Activated CD4-positive, alpha-beta memory T cell treated with anti-CD3 and anti-CD28 coated beads for 36 hours (primary cell): ENCODE measurements at regions of chr14 and their contacts with region 1.

Region 1: GRCh38 chr14:50003213-50004031 is 110.5 kb downstream of the ARF6 start:
- DNase-seq: peak; percentile 91
- H3K4me3 Mint-ChIP-seq: peak overlapping the region; percentile 71
- H3K27ac Mint-ChIP-seq: peak overlapping the region; percentile 95
- H3K4me1 Mint-ChIP-seq: peaks cover 49% of the 10 kb centered on the region
- H3K27me3 Mint-ChIP-seq: no peaks in the 10 kb centered on the region

Region 2: DNA sequence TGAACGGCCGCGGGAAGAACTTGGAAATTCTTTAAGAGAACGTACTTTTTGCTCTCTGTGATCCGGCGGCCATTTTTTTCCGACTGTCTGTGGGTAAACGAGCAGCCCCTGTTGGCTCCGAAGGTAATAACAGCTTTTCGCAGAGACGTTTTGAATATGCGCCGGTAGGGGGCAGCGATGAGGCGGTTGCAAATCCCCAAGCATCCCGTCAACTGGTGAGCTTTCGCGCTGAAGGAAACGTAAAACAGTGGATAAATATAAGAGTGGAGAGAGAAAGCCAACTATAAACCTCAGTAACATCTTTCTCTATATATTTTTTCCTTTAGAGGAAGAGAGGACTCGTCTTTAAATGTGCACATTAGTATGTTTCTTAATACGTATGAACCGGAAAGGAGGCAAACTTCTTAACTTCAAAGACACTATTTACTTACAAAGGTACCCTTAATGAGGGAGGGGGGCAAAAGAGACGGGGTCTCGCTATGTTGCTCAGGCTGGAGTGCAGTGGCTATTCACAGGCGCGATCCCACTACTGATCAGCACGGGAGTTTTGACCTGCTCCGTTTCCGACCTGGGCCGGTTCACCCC is 141.2 kb before region 1 on chr14:
- CTCF ChIA-PET with region 1: interaction called, 41 read pairs
- POLR2A ChIA-PET with region 1: interaction called, 83 read pairs
- intact Hi-C with region 1: loop called (anchors 1 kb)
- DNase-seq: peak; percentile 93
- H3K4me3 Mint-ChIP-seq: no peak overlapping the region
- H3K27ac Mint-ChIP-seq: no peak overlapping the region
- H3K4me1 Mint-ChIP-seq: peaks cover 24% of the 10 kb centered on the region
- H3K27me3 Mint-ChIP-seq: peaks cover 2% of the 10 kb centered on the region

Region 3: GRCh38 chr14:49897968-49898367 is 105.5 kb before region 1 on chr14:
- CTCF ChIA-PET with region 1: interaction called, 7 read pairs
- POLR2A ChIA-PET with region 1: interaction called, 93 read pairs
- intact Hi-C with region 1: loop called (anchors 1 kb)
- DNase-seq: no peak
- H3K4me3 Mint-ChIP-seq: peak overlapping the region; percentile 75
- H3K27ac Mint-ChIP-seq: peak overlapping the region; percentile 93
- H3K4me1 Mint-ChIP-seq: peaks cover 29% of the 10 kb centered on the region
- H3K27me3 Mint-ChIP-seq: no peaks in the 10 kb centered on the region

Region 4: DNA sequence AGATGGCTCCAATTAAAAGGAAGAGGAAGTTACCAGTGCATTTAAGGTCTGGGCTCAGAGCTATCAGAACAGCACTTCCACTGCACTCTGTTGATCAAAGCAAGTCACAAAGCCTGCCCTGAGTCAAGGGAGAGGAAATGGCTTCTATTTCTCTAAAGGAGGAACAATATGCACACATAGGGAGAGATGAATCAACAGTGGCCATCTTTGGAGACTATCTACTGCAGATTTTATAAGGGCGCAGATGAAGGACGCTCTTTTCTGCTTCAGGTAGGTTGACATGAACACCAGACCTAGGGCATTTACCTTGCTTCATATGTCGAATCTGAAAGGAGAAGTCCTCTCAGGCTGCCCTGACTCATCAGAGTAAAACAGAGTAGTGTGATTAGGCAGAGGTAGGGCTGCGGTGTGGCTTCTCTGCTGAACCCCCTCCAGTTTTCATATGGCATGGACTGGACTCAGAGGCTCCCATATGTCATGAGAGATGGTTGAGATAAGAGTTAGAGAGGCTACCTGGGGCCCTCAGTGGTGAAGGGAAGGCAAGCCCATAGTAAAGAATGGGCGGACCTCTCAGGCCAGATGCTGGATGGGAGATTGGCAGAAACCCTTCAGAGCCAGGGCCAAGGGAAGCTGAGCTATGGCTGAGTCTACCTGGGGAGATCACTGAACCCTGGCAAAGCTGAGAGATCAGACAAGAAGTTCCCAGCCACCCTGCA is 26.1 kb before region 1 on chr14:
- CTCF ChIA-PET with region 1: interaction called, 39 read pairs
- POLR2A ChIA-PET with region 1: interaction called, 162 read pairs
- intact Hi-C with region 1: loop called (anchors 1 kb)
- DNase-seq: peak; percentile 65
- H3K4me3 Mint-ChIP-seq: peak overlapping the region; percentile 66
- H3K27ac Mint-ChIP-seq: peak overlapping the region; percentile 91
- H3K4me1 Mint-ChIP-seq: peaks cover 87% of the 10 kb centered on the region
- H3K27me3 Mint-ChIP-seq: no peaks in the 10 kb centered on the region

Region 5: DNA sequence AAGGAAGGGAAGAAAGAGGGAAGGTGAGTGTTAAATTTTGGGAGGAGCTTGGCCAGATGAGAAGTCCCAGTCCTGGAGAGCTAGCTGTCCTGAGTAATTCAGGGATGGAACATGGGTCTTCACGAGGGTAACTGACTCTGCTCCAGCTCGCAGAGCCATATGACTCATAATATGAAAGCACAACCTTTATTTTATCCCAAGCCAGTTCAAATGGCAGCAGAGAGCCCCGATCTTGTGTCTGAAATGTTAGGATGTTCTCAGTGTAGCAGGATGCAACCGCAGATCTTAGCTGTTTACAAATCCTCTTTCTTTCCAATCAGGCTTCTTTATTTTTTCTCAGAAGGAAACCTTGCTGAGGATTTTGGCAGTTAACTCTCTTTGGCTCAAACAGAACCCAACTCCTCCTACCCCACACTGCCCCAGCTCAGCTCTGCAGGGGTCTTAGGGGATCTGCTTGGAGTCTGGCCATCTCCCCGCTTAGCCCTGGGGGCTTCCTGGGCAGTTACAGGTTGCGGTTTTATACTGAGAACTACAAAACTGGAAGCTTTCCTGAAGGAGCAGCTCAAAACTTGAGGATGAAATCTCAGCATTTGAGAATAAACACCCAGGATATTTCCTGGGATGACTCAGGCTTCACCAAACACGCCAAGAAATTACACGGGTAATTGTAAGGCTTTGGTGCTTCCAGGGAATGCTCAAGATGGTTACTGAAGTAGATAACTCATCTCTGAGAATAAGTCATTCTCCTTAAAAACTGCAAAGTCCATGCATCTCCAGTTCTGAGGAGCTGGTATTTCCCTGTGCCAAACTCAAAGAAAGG is 20.5 kb after region 1 on chr14:
- CTCF ChIA-PET with region 1: interaction called, 5 read pairs
- POLR2A ChIA-PET with region 1: interaction called, 5 read pairs
- intact Hi-C with region 1: loop called (anchors 1 kb)
- DNase-seq: no peak
- H3K4me3 Mint-ChIP-seq: no peak overlapping the region
- H3K27ac Mint-ChIP-seq: peak overlapping the region; percentile 31
- H3K4me1 Mint-ChIP-seq: peaks cover 43% of the 10 kb centered on the region
- H3K27me3 Mint-ChIP-seq: no peaks in the 10 kb centered on the region

Region 6: DNA sequence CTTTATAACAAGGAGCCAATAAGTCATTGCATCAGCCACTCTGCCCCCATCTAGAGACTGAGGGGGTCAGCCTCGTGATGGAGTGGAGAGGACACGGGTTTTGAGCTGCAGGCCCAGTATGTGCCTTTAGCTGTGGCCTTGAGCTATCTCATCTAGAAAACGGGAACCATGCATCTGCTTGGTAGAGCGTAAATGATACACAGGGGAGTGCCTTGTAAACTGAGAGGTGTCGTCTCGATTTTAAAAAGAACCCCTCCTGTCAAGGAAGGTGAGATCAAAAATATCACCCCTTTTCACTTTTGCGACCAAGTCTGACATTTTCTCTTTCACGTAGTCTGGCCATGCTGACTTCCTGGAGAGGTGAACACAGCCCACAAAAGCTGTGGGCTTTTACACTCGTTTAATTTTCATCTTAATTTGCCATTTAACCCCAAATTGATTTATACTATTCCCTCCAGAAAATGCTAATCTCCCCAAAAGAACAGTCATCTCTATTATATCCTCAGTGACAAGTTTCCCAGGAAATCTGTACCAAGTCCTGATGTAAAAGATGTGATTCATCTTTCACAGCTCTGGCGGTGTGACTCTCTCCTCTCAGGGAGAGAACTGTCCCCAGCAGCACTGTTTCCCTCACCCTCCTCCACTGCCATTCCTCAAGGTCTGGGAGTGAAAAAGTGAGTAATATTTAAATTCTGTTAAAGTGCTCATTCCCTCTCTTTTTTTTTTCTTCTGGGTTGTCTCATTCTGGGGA is 82.3 kb after region 1 on chr14:
- CTCF ChIA-PET with region 1: interaction called, 4 read pairs
- POLR2A ChIA-PET with region 1: interaction called, 77 read pairs
- intact Hi-C with region 1: loop called (anchors 1 kb)
- DNase-seq: peak; percentile 70
- H3K4me3 Mint-ChIP-seq: peak overlapping the region; percentile 30
- H3K27ac Mint-ChIP-seq: peak overlapping the region; percentile 91
- H3K4me1 Mint-ChIP-seq: peaks cover 92% of the 10 kb centered on the region
- H3K27me3 Mint-ChIP-seq: no peaks in the 10 kb centered on the region

Region 7: DNA sequence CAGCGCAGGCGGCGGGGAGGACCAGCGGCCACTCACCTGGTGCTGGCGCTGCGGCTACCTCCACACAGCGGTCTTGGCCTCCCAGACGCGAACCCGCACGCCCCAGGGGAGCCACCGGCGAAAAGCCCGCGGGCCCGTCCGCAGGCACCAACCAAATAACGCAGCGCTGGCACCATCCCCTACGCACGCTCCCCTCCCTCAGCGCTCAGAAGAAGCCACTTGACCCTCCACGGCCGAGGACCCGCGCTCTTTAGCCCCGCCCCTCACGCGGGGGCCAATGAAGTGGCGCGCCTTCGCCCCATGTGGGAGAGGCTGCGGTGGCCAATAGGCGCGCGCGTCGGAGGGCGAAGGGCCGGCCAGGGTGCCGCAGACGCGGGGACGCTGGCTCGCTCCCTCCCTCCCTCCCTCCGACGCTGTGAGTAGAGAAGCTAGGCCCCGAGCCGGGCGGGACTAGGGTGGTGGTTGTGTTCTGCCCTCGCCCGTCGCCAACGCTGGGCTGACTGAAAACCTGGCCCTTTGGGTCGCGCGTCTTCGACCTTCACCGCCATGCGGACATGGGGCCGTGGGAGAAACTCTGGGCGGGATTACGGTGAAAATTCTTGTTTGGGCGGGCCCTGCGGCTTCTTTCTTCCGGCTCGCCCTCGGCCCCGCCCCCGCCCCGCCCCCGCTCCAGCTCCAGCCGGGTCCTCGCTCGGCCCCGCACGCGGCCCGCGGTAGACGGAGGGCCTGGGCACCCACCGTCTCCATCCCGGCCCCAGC is 308.7 kb after region 1 on chr14 and contains the starts of genes DMAC2L and L2HGDH:
- CTCF ChIA-PET with region 1: no interaction called
- POLR2A ChIA-PET with region 1: no interaction called
- intact Hi-C with region 1: loop called (anchors 10 kb)
- DNase-seq: peak; percentile 93
- H3K4me3 Mint-ChIP-seq: peak within 1 kb of the TSS; percentile 96
- H3K27ac Mint-ChIP-seq: peak within 1 kb of the TSS; percentile 94
- H3K4me1 Mint-ChIP-seq: peaks cover 37% of the 10 kb centered on the region
- H3K27me3 Mint-ChIP-seq: no peaks in the 10 kb centered on the region
- total RNA-seq, gene DMAC2L: 13.4 to 13.9 TPM
- total RNA-seq, gene L2HGDH: 15.0 to 15.2 TPM